Colonic mucosa (tissue), 4 donors: ENCODE measurements at regions of chr2 and their contacts with region 1.

Region 1: GRCh38 chr2:98175811-98176210 is 88.8 kb downstream of the VWA3B start:
- DNase-seq: peak; percentile 34
- H3K4me3 ChIP-seq: no peak overlapping the region
- H3K27ac ChIP-seq: no peak overlapping the region
- H3K4me1 ChIP-seq: no peaks in the 10 kb centered on the region
- H3K27me3 ChIP-seq: no peaks in the 10 kb centered on the region
- CTCF ChIP-seq: no peak

Region 2: GRCh38 chr2:98009887-98010760 is 165.7 kb before region 1 on chr2:
- intact Hi-C with region 1: loop called (anchors 10 kb)
- DNase-seq: no peak
- H3K4me3 ChIP-seq: no peak overlapping the region
- H3K27ac ChIP-seq: no peak overlapping the region
- H3K4me1 ChIP-seq: no peaks in the 10 kb centered on the region
- H3K27me3 ChIP-seq: no peaks in the 10 kb centered on the region
- CTCF ChIP-seq: no peak

Region 3: GRCh38 chr2:98385050-98385699 is 209.4 kb after region 1 on chr2:
- intact Hi-C with region 1: loop called (anchors 10 kb)
- DNase-seq: peak; percentile 83
- H3K4me3 ChIP-seq: no peak overlapping the region
- H3K27ac ChIP-seq: no peak overlapping the region
- H3K4me1 ChIP-seq: no peaks in the 10 kb centered on the region
- H3K27me3 ChIP-seq: no peaks in the 10 kb centered on the region
- CTCF ChIP-seq: peak; percentile 92